Cardiac septum (tissue), 1 donor: ENCODE measurements at regions of chr19 and their contacts with region 1.

Region 1: DNA sequence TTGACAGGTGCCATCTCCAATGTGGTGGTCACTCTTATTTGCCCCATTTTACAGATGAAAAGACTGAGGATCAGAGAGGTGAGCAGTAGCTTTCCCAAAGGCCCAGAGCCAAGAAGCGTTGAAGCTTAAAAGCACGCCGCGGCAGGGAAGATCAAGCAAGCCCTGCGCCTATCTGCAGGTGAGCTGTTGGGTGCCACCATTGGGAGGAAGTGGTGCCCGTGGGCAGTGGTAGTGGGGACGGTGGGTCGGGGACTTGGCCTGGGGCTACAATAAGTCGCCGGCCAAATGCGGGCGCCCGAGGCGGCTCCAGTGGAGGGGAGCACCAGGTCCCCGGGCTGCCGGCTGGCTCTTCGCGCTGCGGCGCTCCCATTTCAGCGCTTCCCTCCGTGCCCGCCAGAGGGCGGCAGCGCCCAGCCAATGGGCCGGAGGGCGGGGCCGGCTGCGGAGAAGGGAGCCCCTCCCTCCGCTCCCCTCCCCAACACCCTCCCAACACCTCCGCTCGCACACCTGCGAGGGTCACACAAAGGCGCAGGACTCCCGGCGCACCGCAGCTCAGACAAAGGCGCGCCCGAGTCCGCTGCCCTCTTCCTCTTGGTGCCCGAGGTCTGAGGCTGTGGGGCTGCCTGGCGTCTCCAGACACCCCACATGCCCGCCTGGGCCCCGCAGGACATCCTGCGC is 744 bp upstream of the POU2F2 start:
- DNase-seq: peak; percentile 90

Region 2: DNA sequence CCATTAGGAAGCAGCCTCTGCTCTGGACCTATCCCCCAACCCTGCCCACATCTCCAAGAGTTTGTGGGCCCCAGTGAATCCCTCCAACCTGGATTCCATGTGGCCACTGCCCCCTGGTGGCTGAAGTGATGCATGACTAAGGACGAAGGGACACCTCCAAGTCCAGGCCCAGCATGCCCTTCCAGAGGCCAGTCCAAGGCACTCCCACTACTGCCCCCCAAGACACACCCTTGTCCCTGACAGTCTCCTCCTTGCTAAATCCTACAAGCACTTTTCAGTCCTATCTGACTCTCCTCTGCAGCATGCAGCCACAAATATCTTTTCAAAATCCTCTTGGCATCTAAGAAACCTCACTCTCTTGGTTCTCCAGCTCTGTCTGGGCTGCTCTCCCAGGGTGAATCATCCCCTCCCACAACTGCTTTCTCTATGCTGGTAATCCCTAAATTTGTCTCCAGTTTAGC is 51.4 kb after region 1 on chr19:
- intact Hi-C with region 1: loop called (anchors 1 kb)
- DNase-seq: no peak

Region 3: DNA sequence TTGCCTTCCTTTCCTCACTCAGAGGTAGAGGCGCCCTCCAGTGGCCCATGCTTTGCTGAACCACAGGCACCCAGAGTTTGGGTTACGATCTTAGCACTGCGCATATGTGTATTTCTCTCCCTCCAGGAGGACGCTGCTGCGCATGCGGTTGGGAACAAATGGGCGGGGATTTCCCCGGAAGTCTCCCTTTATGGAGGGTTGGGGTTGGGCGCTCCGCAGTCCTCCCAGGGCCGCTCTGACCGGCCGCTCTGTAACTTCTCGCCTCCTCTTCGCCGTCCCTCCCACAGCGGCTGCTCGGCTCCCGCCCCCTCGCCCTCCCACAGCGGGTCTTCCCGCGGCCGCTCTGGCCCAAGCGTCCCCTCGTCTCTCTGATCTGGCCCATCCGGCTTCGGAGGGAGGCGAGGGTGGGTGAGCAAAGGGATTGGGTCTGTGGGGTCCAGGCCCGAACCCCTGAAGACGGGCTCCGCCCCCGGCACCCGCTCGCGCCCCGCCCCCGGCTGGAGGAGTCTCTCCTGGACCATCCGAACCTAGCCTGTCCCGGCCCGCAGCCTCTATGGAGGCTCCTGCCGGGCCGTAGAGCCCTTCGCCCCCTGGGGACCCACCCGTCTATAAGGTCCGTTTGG is 192.4 kb after region 1 on chr19 and contains the start of gene MEGF8:
- intact Hi-C with region 1: loop called (anchors 5 kb)
- DNase-seq: peak; percentile 99
- total RNA-seq, gene MEGF8: 45.8 TPM